WTC11 (cell line): ENCODE measurements at regions of chr17 and their contacts with region 1.

Region 1: GRCh38 chr17:5667871-5668270 is 83.6 kb upstream of the NLRP1 start:
- DNase-seq: peak; percentile 19
- ATAC-seq: peak; percentile 71
- H3K4me3 Mint-ChIP-seq: no peak overlapping the region
- H3K27ac Mint-ChIP-seq: no peak overlapping the region
- H3K4me1 Mint-ChIP-seq: peaks cover 4% of the 10 kb centered on the region
- H3K27me3 Mint-ChIP-seq: no peaks in the 10 kb centered on the region
- CTCF ChIP-seq: no peak

Region 2: DNA sequence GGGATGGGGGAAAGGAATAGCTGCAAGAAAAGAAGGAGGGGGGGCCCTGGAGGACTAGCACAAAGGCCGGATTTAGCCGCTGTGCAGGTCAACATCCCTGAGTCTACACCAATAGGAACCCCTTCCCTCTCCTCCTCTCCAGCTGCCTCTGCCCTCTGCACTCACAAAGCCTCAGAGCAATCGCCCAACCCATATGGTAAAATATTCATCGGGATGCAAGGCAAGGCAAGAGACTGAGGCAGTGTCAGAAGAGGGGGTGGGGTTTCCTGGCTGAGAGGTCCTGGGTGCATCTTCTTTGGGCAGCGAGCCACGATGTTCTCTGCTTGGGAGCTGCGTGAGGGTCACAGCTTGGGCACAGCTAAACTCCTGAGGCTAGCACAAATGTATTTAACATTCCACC is 31.9 kb after region 1 on chr17:
- CTCF ChIA-PET with region 1: interaction called, 13 read pairs
- POLR2A ChIA-PET with region 1: no interaction called
- DNase-seq: peak; percentile 46
- ATAC-seq: peak; percentile 84
- H3K4me3 Mint-ChIP-seq: 0 out of 2 replicates have a peak overlapping the region, but pooled peaks have one; percentile 14
- H3K27ac Mint-ChIP-seq: peak overlapping the region; percentile 34; the same call in 1 of the 2 replicates
- H3K4me1 Mint-ChIP-seq: peaks cover 71% of the 10 kb centered on the region
- H3K27me3 Mint-ChIP-seq: no peaks in the 10 kb centered on the region
- CTCF ChIP-seq: no peak